Naive thymus-derived CD4-positive, alpha-beta T cell (primary cell): ENCODE measurements at regions of chr14 and their contacts with region 1.

Region 1: DNA sequence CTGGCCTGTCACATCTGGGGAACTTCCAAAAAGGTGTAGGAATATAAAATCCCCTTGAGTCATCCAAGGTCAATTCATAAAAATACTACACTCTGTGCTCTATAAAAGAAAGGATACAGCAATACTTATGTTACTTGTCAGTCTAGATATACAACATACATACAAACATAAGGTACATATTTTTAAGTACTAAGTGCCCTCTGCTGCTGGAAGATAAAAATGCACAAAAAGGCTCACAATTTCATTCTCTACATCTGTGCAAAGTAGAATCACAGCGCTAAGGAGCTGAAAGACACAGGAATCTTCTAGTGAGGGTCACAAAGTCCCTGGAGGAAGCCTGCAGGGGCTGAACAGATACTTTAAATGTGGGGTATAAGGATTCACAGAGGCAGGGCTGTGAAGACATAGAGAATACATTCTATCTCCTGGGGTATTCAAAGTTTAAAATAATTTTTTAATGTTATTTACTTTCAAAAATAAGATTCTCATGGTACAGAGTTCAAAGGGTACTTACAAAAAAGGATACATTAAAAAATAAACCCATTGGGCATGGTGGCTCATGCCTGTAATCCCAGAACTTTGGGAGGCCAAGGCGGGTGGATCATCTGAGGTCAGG is 10.2 kb upstream of the GOLGA5 start:
- DNase-seq: peak in 7 of 9 donors; percentile 31 to 65 (median 47)
- ATAC-seq: peak; percentile 81
- H3K4me3 ChIP-seq: no peak overlapping the region
- H3K4me3 Mint-ChIP-seq: no peak overlapping the region
- H3K27ac ChIP-seq: no peak overlapping the region
- H3K27ac Mint-ChIP-seq: no peak overlapping the region
- H3K4me1 ChIP-seq: no peaks in the 10 kb centered on the region
- H3K4me1 Mint-ChIP-seq: peaks cover 0 to 20% (median 0%) of the 10 kb centered on the region in 7 donors
- H3K27me3 ChIP-seq: no peaks in the 10 kb centered on the region
- H3K27me3 Mint-ChIP-seq: peaks cover 0 to 4% (median 0%) of the 10 kb centered on the region in 5 donors

Region 2: GRCh38 chr14:92717571-92718042 is 66.3 kb before region 1 on chr14:
- CTCF ChIA-PET with region 1: interaction called, 21 read pairs
- POLR2A ChIA-PET with region 1: no interaction called
- intact Hi-C with region 1: loop called (anchors 1 kb)
- DNase-seq: no peak
- ATAC-seq: peak; percentile 63
- H3K4me3 ChIP-seq: no peak overlapping the region
- H3K4me3 Mint-ChIP-seq: peak overlapping the region in 1 of 10 donors; percentile 30
- H3K27ac ChIP-seq: no peak overlapping the region
- H3K27ac Mint-ChIP-seq: peak overlapping the region in 2 of 9 donors; percentile 13 to 48
- H3K4me1 ChIP-seq: no peaks in the 10 kb centered on the region
- H3K4me1 Mint-ChIP-seq: peaks cover 0 to 8% (median 0%) of the 10 kb centered on the region in 7 donors
- H3K27me3 ChIP-seq: no peaks in the 10 kb centered on the region
- H3K27me3 Mint-ChIP-seq: peaks cover 0 to 2% (median 0%) of the 10 kb centered on the region in 5 donors

Region 3: GRCh38 chr14:92832137-92832700 is 48.3 kb after region 1 on chr14:
- CTCF ChIA-PET with region 1: no interaction called
- POLR2A ChIA-PET with region 1: no interaction called
- intact Hi-C with region 1: no loop called
- DNase-seq: no peak
- ATAC-seq: no peak
- H3K4me3 ChIP-seq: no peak overlapping the region
- H3K4me3 Mint-ChIP-seq: no peak overlapping the region
- H3K27ac ChIP-seq: no peak overlapping the region
- H3K27ac Mint-ChIP-seq: peak overlapping the region in 3 of 9 donors; percentile 7 to 38 (median 10)
- H3K4me1 ChIP-seq: no peaks in the 10 kb centered on the region
- H3K4me1 Mint-ChIP-seq: peaks cover 0 to 1% (median 0%) of the 10 kb centered on the region in 7 donors
- H3K27me3 ChIP-seq: no peaks in the 10 kb centered on the region
- H3K27me3 Mint-ChIP-seq: no peaks in the 10 kb centered on the region

Region 4: GRCh38 chr14:93045965-93046704 is 262.2 kb after region 1 on chr14:
- CTCF ChIA-PET with region 1: no interaction called
- POLR2A ChIA-PET with region 1: no interaction called
- intact Hi-C with region 1: no loop called
- DNase-seq: no peak
- ATAC-seq: no peak
- H3K4me3 ChIP-seq: no peak overlapping the region
- H3K4me3 Mint-ChIP-seq: peak overlapping the region in 2 of 10 donors; percentile 36 to 40
- H3K27ac ChIP-seq: no peak overlapping the region
- H3K27ac Mint-ChIP-seq: peak overlapping the region in 1 of 9 donors; percentile 12
- H3K4me1 ChIP-seq: no peaks in the 10 kb centered on the region
- H3K4me1 Mint-ChIP-seq: peaks cover 7 to 47% (median 25%) of the 10 kb centered on the region in 7 donors
- H3K27me3 ChIP-seq: no peaks in the 10 kb centered on the region
- H3K27me3 Mint-ChIP-seq: no peaks in the 10 kb centered on the region